H1 (cell line): ENCODE measurements at regions of chr12 and their contacts with region 1.

Region 1: GRCh38 chr12:121626087-121626852 is at the start of gene ORAI1:
- DNase-seq: peak; percentile 73 to 98
- H3K4me3 ChIP-seq: peak within 1 kb of the TSS; percentile 61 to 93 (median 79)
- H3K27ac ChIP-seq: peak within 1 kb of the TSS; percentile 72
- H3K4me1 ChIP-seq: peaks cover 10 to 20% (median 14%) of the 10 kb centered on the region in 4 experiments
- H3K27me3 ChIP-seq: no peaks in the 10 kb centered on the region
- CTCF ChIP-seq: peak in 2 of 3 experiments; percentile 8 to 20; a peak in 1 of 4 replicates
- EP300 ChIP-seq: peak; percentile 27 to 53; a peak in 1 of 3 replicates
- POLR2A ChIP-seq: peak; percentile 55 to 69
- RAD21 ChIP-seq: peak in 1 of 2 experiments; percentile 5; a peak in 1 of 4 replicates
- total RNA-seq, gene ORAI1: 28.4 and 29.9 TPM in 2 replicates

Region 2: GRCh38 chr12:121560392-121561008 is 65.8 kb before region 1 on chr12:
- CTCF ChIA-PET with region 1: interaction called, 20 read pairs
- POLR2A ChIA-PET with region 1: interaction called, 7 read pairs
- DNase-seq: no peak
- H3K4me3 ChIP-seq: no peak overlapping the region
- H3K27ac ChIP-seq: no peak overlapping the region
- H3K4me1 ChIP-seq: peaks cover 0 to 5% (median 2%) of the 10 kb centered on the region in 4 experiments; a peak in 2 of 7 replicates
- H3K27me3 ChIP-seq: no peaks in the 10 kb centered on the region
- CTCF ChIP-seq: no peak
- EP300 ChIP-seq: no peak
- POLR2A ChIP-seq: no peak
- RAD21 ChIP-seq: no peak

Region 3: DNA sequence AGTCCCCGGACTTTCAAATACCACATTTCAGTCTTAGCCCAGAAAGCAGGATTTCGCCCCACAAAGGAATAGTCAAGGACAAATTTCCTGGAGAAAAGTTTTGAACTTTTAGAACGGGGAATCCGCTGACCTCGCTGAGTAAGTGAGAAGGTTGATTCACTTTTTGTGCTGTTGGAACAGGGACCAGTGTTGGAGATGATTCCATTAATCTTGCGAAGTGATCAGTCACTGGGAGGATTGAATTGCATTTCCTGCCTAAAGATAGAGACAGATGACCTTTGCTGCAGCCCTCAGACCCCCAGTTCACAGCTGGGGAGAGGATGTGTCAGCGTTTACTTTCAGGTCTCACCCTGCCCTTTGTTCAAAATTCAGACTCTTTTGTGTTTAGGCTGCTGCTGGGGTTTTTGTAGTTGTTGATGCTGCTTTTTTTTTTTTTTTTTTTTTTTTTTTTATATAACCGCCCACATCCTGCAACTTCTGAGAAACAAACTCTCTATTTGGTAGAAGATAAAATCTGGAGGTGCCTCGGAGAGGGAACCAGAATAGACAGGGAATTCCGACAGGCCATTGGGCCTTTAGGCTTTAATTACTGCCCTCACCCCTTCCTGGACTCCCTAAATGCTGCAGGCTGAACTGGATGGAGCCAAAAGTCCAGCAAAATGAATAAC is 35.7 kb before region 1 on chr12:
- CTCF ChIA-PET with region 1: interaction called, 10 read pairs
- POLR2A ChIA-PET with region 1: interaction called, 6 read pairs
- DNase-seq: peak in 1 of 2 experiments; percentile 49
- H3K4me3 ChIP-seq: peak overlapping the region in 2 of 4 experiments; percentile 12 to 38; a peak in 3 of 8 replicates
- H3K27ac ChIP-seq: peak overlapping the region; percentile 29; the same call in 1 of the 2 replicates
- H3K4me1 ChIP-seq: peaks cover 2 to 8% (median 8%) of the 10 kb centered on the region in 4 experiments; a peak in 4 of 7 replicates
- H3K27me3 ChIP-seq: no peaks in the 10 kb centered on the region
- CTCF ChIP-seq: no peak
- EP300 ChIP-seq: no peak
- POLR2A ChIP-seq: no peak
- RAD21 ChIP-seq: no peak

Region 4: GRCh38 chr12:121637231-121637914 is 11.1 kb after region 1 on chr12:
- CTCF ChIA-PET with region 1: interaction called, 39 read pairs
- POLR2A ChIA-PET with region 1: interaction called, 70 read pairs
- DNase-seq: no peak
- H3K4me3 ChIP-seq: no peak overlapping the region
- H3K27ac ChIP-seq: no peak overlapping the region
- H3K4me1 ChIP-seq: peaks cover 2 to 10% (median 8%) of the 10 kb centered on the region in 4 experiments; a peak in 6 of 7 replicates
- H3K27me3 ChIP-seq: no peaks in the 10 kb centered on the region
- CTCF ChIP-seq: no peak
- EP300 ChIP-seq: no peak
- POLR2A ChIP-seq: no peak
- RAD21 ChIP-seq: no peak

Region 5: DNA sequence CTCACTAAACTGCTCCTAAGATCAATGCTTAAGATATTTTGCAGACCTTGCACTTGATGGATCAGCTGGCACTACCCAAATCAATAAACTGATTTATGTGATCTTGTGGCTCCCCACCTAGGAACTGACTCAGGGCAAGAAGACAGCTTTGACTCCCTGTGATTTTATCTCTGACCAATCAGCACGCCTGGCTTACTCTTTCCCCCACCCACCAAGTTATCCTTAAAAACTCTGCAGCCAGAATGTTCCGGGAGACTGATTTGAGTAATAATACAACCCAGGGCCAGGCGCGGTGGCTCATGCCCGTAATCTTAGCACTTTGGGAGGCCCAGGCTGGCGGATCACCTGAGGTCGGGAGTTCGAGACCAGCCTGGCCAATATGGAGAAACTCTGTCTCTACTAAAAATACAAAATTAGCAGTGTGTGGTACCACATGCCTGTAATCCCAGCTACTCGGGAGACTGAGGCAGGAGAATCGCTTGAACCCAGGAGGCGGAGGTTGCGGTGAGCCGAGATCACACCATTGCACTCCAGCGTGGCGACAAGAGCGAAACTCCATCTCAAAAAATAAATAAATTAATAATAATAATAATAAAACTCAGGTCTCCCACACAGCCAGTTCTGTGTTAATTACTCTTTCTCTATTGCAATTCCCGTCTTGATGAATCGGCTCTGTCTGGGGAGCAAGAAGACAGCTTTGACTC is 31.2 kb after region 1 on chr12:
- CTCF ChIA-PET with region 1: interaction called, 8 read pairs
- POLR2A ChIA-PET with region 1: interaction called, 14 read pairs
- DNase-seq: no peak
- H3K4me3 ChIP-seq: no peak overlapping the region
- H3K27ac ChIP-seq: no peak overlapping the region
- H3K4me1 ChIP-seq: peaks cover 0 to 8% (median 4%) of the 10 kb centered on the region in 4 experiments; a peak in 5 of 7 replicates
- H3K27me3 ChIP-seq: no peaks in the 10 kb centered on the region
- CTCF ChIP-seq: no peak
- EP300 ChIP-seq: no peak
- POLR2A ChIP-seq: no peak
- RAD21 ChIP-seq: no peak

Region 6: GRCh38 chr12:121678716-121679580 is 52.7 kb after region 1 on chr12:
- CTCF ChIA-PET with region 1: interaction called, 10 read pairs
- POLR2A ChIA-PET with region 1: interaction called, 10 read pairs
- DNase-seq: no peak
- H3K4me3 ChIP-seq: no peak overlapping the region
- H3K27ac ChIP-seq: no peak overlapping the region
- H3K4me1 ChIP-seq: peaks cover 0 to 4% (median 0%) of the 10 kb centered on the region in 4 experiments; a peak in 4 of 7 replicates
- H3K27me3 ChIP-seq: no peaks in the 10 kb centered on the region
- CTCF ChIP-seq: no peak
- EP300 ChIP-seq: no peak
- POLR2A ChIP-seq: no peak
- RAD21 ChIP-seq: no peak